AG04449 (cell line): ENCODE measurements at regions of chr3 and their contacts with region 1.

Region 1: DNA sequence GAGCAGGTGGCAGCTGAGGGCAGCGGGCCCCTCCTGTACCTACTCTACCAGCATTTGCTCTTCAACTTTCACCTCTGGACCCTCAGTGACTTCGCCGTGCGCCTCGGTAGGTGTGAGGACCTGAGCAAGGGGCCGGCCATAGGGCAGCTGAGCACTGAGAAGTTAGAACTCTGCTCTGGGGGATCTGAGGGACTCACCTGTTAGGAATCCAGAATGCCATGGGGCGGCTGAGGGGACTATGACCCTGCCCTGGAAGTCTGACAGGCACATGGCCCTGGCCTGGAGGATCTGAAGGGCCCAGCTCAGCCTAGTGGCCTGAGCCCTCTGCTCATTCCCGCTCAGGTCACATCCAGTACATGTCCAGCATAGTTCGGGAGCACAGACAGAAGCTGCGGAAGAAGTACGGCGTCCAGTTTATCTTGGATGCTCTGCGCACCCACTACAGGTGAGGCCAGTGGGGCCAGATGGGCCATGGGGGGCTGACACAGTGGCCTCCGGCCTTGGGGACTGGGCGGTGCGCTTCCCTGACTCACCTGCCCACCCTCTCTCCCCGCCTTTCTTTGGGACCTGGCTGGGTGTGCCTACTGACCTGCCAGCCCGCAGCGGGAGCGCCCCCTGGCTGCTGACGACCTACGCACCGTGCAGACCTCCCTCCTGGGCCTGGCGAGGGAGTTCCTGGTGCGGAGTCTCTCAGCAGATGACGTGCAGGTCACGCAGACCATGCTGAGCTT is 18.8 kb downstream of the NBEAL2 start:
- DNase-seq: no peak
- H3K4me3 ChIP-seq: no peak overlapping the region
- CTCF ChIP-seq: peak; percentile 83

Region 2: DNA sequence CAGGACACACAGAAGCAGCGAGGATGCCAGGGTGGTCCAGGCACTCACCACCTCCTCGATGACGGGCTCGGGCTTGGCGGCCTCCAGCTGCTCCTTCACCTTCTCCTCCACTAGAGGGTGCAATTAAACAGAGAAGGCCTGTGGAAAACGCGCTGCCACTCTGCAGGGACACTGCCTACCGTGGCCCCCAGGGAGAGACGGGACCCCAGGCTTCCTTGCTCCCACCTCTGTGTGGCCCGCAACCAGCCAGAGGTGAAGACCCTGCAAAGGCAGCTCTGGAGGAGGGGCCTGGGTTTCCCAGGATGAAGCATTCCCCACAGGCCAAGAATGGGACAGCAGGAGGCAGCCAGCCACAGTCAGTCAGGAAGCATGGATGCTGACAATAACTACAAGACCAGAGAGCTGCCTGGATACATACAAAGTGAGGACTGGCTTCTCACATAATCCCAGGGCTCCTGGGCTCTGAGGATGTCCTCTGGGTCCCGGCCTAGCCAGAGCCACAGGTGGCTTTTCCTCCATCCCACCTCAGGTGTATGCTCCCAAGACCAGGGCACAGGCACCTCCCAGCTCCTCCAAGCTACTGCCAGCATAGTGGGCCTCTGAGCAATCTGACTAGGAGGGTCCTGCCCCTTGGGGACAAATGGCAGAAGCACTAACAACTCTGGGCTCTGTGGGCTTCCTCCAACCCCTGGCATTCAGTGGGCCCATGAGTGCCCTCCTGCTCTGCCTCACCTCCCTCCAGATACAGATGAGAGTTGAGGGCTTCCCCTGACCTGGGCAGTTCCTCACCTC is 74.5 kb before region 1 on chr3:
- CTCF ChIA-PET with region 1: interaction called, 14 read pairs
- POLR2A ChIA-PET with region 1: no interaction called
- DNase-seq: no peak
- H3K4me3 ChIP-seq: no peak overlapping the region
- CTCF ChIP-seq: peak; percentile 61

Region 3: DNA sequence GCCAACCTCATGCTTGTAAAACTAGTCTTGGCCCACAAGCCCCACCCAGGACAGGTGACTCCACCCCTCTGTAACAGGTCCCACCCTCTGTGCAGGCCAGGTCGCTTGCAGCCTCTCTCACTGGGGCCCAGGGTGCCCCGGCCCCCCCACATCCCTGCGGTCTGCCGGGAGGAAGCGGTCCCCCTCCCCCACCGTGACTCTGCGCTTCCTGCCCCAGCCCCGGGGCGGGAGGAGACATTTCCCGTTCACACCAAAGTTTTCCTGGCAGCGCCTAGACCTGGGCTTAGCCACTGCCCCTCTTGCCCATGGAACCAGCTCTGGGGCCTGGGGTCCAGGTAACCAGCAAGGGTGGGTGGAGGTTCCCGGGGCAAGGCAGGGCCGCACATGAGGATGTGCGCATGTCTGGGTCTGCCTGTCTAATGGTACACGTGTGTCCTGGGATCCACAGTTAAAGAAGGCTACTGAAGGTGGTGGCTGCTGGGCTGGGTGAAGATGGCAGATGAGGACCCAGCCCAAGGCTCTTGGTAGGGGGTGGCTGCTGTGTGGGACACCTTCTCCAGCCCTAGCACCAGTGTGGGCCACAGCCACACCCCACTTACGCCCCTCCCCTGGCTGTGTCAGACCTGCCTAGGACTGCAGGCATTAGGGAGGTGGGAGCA is 10.4 kb before region 1 on chr3:
- CTCF ChIA-PET with region 1: interaction called, 15 read pairs
- POLR2A ChIA-PET with region 1: no interaction called
- DNase-seq: no peak
- H3K4me3 ChIP-seq: no peak overlapping the region
- CTCF ChIP-seq: no peak

Region 4: DNA sequence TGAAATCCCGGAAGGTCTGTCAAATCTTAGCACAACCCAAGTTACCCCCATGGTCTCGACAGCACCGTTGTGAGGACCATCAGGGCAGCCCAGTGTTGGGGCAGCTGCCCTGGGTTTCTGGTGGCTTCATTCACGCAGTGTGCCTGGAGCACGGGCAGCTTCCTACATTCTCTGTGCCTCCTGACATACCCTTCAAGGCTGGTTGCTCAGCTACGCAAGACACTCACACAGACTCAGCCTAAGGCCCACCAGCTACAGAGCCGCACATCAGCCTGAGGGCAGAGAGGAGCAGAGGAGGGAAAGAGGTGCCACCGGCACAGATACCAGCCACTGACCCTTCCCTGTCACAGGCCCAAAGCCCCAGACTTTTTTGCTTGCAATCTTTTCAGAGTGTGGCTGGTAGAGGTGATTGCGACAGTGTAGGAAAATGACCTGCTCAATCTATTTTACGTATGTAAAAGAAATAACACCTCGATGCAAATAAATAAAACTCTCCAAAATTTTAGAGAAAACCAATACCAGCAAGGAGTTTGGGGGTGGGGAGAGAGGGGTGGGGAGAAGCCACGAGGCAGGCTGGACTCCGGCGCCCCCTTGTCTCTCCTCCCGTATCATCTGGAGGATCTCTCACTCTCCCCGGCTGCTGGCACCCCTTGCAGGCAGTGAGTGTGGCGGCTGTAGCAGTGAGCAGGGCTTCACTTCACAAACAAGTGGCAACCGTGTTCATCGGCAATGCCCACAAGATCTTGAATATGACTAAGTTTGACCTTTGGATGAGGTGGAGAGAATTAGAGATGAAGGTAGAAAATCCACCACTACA is 567.7 kb after region 1 on chr3:
- CTCF ChIA-PET with region 1: no interaction called
- POLR2A ChIA-PET with region 1: no interaction called
- DNase-seq: no peak
- H3K4me3 ChIP-seq: no peak overlapping the region
- CTCF ChIP-seq: no peak